ENCODE measurements at regions of chrX and their contacts with region 1.

Region 1: GRCh38 chrX:1580735-1581531 is 10.5 kb upstream of the AKAP17A start:
- DNase-seq: peak; percentile 68 to 75 (median 70)
- ATAC-seq: peak; percentile 86
- H3K4me3 ChIP-seq: no peak overlapping the region
- H3K27ac ChIP-seq: no peak overlapping the region
- H3K4me1 ChIP-seq: no peaks in the 10 kb centered on the region; a peak in 1 of 5 replicates
- H3K27me3 ChIP-seq: no peaks in the 10 kb centered on the region
- CTCF ChIP-seq: peak; percentile 59 to 74 (median 71)
- EP300 ChIP-seq: no peak
- POLR2A ChIP-seq: no peak
- RAD21 ChIP-seq: peak; percentile 56 to 80

Region 2: DNA sequence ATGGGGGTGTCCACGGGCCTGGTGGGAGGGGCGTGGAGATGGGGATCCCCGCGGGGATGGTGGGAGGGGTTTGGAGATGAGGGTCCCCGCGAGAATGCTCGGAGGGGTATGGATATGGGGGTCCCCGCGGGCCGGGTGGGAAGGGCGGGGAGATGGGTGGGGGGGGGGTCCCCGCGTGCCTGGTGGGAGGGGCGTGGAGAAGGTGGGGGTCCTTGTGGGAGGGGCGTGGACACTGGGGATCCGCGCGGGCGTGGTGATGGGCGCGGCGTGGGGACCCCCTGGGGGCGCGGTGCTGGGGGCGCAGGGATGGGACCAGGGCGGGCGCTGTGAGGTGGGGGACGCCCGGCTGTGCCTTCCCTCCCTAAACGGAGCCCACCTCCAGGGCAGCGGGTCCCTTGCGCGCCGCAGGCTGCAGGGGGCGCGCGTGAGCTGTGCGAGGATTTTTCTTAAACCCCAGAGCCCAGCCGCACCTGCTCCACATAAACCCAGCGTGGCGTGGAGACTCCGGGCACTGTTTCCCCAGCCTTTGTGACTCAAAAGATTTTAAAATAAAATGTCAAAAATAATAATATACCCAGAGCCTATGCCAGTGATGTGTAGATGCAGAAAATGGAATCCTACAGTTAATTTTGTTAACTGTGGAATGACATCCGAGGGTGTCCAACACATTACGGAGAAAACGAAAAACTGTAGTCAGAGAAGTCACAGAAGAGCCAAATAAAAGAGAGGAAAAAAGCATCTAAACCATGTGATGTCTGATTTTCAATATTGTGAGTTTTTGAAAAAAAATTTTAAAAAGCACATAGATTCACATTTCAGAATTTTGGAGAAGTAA is 126.8 kb before region 1 on chrX:
- CTCF ChIA-PET with region 1: no interaction called
- POLR2A ChIA-PET with region 1: no interaction called
- in situ Hi-C with region 1: no loop called
- intact Hi-C with region 1: loop called (anchors 1 kb)
- DNase-seq: peak; percentile 64 to 84 (median 67)
- ATAC-seq: peak; percentile 74
- H3K4me3 ChIP-seq: no peak overlapping the region
- H3K27ac ChIP-seq: no peak overlapping the region
- H3K4me1 ChIP-seq: peaks cover 0 to 13% of the 10 kb centered on the region in 2 experiments; a peak in 2 of 5 replicates
- H3K27me3 ChIP-seq: peaks cover 0 to 17% of the 10 kb centered on the region in 2 experiments; a peak in 2 of 5 replicates
- CTCF ChIP-seq: peak; percentile 74 to 85 (median 78)
- EP300 ChIP-seq: no peak
- POLR2A ChIP-seq: no peak
- RAD21 ChIP-seq: peak; percentile 84 to 86

Region 3: GRCh38 chrX:1468250-1468772 is 112.6 kb before region 1 on chrX:
- CTCF ChIA-PET with region 1: no interaction called
- POLR2A ChIA-PET with region 1: no interaction called
- in situ Hi-C with region 1: loop called (anchors 10 kb)
- intact Hi-C with region 1: no loop called
- DNase-seq: no peak
- ATAC-seq: peak; percentile 70
- H3K4me3 ChIP-seq: no peak overlapping the region
- H3K27ac ChIP-seq: no peak overlapping the region
- H3K4me1 ChIP-seq: no peaks in the 10 kb centered on the region; a peak in 1 of 5 replicates
- H3K27me3 ChIP-seq: peaks cover 0 to 8% of the 10 kb centered on the region in 2 experiments; a peak in 2 of 5 replicates
- CTCF ChIP-seq: peak in 2 of 3 experiments; percentile 50 to 57; a peak in 4 of 6 replicates
- EP300 ChIP-seq: no peak
- POLR2A ChIP-seq: no peak
- RAD21 ChIP-seq: peak; percentile 39 to 48